ENCODE measurements at regions of chr10 and their contacts with region 1.

Region 1: GRCh38 chr10:123043409-123043925 is 34.7 kb downstream of the ACADSB start:
- DNase-seq: peak in 8 of 10 donors; percentile 35 to 95 (median 64)

Region 2: DNA sequence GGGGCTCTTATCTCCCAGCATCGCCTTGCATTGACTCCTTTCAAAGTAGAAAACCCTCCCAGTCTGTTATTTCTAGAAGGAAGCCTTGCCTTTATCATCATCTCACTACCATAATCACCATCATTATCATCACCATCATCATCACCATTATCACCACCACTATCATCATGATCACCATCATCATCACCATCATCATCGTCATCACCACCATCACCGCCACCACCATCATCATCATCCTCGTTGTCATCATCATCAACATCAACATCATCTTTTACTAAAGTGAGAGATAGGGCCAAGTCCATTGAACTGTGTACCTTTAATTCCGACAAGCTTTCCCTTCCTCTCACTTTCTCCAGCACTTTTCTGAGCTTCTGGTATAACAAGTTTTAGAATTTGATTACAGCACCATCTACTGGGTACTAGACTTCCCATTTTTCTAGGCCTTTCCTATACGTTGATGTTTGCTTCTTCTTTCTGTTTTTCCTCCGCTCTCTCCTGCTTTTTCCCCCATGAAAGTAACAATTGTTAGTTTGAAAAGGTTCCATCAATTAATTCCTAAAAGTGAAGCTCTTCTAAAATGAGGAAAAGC is 337.1 kb after region 1 on chr10:
- intact Hi-C with region 1: loop called (anchors 1 kb)
- DNase-seq: no peak